Activated naive CD4-positive, alpha-beta T cell treated with anti-CD3 and anti-CD28 coated beads, Interleukin-2, amount 10 ng/mL, durations not matched to agents 7 days and 5 days (primary cell): ENCODE measurements at regions of chr22 and their contacts with region 1.

Region 1: DNA sequence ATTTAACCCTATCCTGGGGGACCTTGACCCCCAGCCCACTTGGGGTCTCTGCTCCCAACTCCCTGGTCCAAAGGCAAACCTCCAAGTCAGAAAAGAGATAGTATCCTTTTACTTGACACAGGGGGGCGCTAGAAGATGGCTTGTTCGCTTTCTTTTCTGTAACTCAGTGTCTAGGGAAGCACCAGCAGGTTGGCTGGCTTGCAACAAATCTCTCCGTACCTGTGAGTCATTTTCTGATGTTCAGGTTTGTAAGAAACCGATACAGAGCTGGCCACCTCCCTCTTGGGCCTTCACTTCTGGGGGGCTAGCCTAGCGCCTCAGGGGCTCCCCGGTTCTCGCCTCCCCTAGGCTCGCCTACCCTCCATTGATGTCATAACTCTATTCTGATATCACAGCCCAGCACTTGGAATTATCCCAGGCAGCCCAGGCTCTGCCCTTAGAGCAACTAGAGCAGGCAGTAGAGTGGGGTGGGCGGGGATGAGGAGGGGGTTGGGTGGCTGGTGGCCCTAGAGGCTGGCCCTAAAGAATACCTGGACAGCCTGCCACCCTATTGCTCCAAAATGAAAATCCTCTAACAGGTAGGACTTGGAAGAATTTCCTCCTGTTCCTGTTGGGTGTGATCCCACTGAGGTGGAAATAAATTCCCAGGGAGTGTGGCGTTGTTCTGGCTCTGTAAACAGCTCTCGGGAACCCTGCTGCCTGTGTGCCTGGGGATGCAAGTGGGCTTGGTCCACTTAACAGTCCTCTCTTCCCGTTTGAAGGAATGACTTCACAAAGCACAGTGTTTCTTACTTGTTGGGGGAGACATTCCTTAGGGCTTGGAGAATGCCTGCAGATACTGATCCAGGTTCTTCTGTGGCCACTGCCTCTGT is 69.4 kb downstream of the OSBP2 start:
- DNase-seq: peak; percentile 74
- H3K4me3 Mint-ChIP-seq: no peak overlapping the region
- H3K27ac Mint-ChIP-seq: no peak overlapping the region
- H3K4me1 Mint-ChIP-seq: no peaks in the 10 kb centered on the region
- H3K27me3 Mint-ChIP-seq: peaks cover 7% of the 10 kb centered on the region

Region 2: DNA sequence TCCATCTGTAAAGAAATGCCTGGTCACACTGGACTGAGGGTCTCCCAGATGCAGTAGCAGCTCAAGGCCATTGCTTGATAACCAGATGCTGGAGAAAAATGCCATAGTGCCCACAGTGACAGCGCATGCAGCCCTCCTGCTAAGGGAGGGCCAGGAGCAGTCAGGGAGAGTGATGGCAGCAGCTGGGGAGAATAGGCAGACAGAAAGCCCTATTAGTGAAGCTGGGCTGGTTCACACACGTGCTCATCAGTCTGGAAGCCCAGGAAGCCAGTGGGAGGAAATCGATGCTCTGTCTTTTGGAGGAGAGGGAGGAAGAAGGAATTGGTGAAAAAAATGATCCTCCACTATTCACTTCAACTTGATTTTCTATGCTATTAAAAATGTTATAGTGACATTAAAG is 13.5 kb after region 1 on chr22:
- CTCF ChIA-PET with region 1: no interaction called
- DNase-seq: no peak
- H3K4me3 Mint-ChIP-seq: no peak overlapping the region
- H3K27ac Mint-ChIP-seq: no peak overlapping the region
- H3K4me1 Mint-ChIP-seq: peaks cover 6% of the 10 kb centered on the region
- H3K27me3 Mint-ChIP-seq: no peaks in the 10 kb centered on the region

Region 3: DNA sequence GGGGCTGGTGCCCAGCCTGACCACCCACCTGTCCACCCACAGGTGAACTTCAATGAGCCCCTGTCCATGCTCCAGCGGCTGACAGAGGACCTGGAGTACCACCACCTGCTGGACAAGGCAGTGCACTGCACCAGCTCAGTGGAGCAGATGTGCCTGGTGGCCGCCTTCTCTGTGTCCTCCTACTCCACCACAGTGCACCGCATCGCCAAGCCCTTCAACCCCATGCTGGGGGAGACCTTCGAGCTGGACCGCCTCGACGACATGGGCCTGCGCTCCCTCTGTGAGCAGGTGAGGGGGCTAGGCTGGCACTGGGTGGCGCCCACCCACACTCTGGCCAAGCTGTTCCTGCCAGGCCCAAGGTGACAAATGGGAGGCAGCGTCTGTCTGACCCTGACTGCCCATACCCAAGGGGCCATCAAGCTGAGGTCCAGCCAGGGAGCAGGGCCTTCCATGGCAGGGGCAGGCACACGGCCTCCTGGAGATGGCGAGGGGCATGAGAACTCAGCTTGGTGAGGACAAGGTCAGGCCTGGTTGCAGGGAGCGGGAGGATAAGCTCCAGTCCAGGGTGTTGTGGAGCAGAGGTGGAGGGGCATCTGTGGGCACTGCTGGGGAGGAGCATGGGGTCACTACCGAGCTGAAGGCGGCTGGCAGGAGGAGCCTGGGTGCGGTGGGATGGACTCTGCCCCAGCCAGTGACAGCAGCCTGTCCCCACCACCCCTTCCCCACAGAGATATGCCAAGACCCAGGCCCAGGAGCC is 126.8 kb after region 1 on chr22:
- CTCF ChIA-PET with region 1: interaction called, 20 read pairs
- DNase-seq: peak; percentile 50
- H3K4me3 Mint-ChIP-seq: no peak overlapping the region
- H3K27ac Mint-ChIP-seq: no peak overlapping the region
- H3K4me1 Mint-ChIP-seq: peaks cover 24% of the 10 kb centered on the region
- H3K27me3 Mint-ChIP-seq: no peaks in the 10 kb centered on the region

Region 4: GRCh38 chr22:31080848-31081649 is 317.0 kb after region 1 on chr22 and contains the start of gene SMTN:
- CTCF ChIA-PET with region 1: interaction called, 22 read pairs
- DNase-seq: peak; percentile 94
- H3K4me3 Mint-ChIP-seq: peak within 1 kb of the TSS; percentile 89
- H3K27ac Mint-ChIP-seq: peak within 1 kb of the TSS; percentile 74
- H3K4me1 Mint-ChIP-seq: peaks cover 44% of the 10 kb centered on the region
- H3K27me3 Mint-ChIP-seq: peaks cover 18% of the 10 kb centered on the region